ENCODE measurements at regions of chr7 and their contacts with region 1.

Region 1: DNA sequence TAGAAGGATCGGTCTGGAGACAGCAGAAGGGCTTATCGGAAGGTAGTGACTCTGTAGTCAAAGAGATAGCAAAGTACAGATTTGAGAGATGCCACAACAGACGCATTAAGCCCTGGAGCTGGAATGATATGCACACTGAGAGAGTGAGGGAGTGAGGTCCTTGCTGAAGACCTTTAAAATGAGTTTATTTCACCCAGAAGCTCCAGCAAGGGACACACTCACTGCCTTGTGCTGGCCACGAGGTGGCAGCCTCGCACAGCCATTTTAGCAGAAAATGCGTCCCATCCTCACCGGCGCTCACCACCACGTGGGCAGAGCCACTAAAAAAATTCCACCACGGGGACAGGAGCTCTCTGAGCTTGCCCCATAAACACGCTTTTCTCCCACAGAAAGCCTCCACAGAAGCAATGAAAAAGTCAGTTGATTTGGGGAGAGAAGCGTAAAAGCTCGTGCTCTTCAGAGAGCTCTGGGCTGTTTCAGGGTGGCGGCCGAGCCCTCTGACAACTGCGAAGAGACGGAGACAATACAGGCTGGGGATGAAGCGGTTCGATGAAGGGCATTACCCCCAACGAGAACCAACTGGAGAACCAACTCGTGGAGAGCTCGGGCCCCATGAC is 163.0 kb upstream of the KLF14 start:
- DNase-seq: peak; percentile 67 to 91
- ATAC-seq: peak; percentile 26 to 57
- H3K4me3 ChIP-seq: no peak overlapping the region
- H3K27ac ChIP-seq: peak overlapping the region; percentile 92 to 93
- H3K4me1 ChIP-seq: peaks cover 97% of the 10 kb centered on the region
- CTCF ChIP-seq: peak; percentile 85
- EP300 ChIP-seq: no peak
- POLR2A ChIP-seq: no peak
- RAD21 ChIP-seq: peak; percentile 90

Region 2: DNA sequence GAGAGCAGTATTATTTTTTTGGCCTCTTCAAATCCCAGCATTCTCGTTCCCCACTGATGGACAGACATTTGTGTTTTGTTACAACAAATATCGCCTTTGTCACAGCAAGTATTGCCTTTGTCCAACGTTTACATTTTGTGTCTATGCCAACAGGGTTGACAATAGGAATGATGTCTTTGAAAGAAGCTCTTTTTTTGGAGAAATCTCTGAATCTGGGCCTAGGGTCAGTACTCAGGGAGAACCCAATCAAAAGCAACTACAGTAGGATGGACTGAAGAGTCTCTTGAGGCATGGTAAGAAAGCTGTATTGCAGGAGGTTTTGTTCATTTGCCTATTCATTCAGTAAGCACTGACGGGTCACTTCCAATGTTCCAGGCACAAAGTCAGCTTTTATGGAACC is 105.3 kb before region 1 on chr7:
- CTCF ChIA-PET with region 1: no interaction called
- POLR2A ChIA-PET with region 1: no interaction called
- DNase-seq: no peak
- ATAC-seq: no peak
- H3K4me3 ChIP-seq: no peak overlapping the region
- H3K27ac ChIP-seq: no peak overlapping the region
- H3K4me1 ChIP-seq: no peaks in the 10 kb centered on the region
- CTCF ChIP-seq: no peak
- EP300 ChIP-seq: no peak
- POLR2A ChIP-seq: no peak
- RAD21 ChIP-seq: no peak

Region 3: GRCh38 chr7:130850956-130851355 is 46.0 kb before region 1 on chr7:
- CTCF ChIA-PET with region 1: interaction called, 17 read pairs
- POLR2A ChIA-PET with region 1: interaction called, 3 read pairs
- DNase-seq: no peak
- ATAC-seq: no peak
- H3K4me3 ChIP-seq: no peak overlapping the region
- H3K27ac ChIP-seq: peak overlapping the region; percentile 5; a peak in 1 of 6 replicates
- H3K4me1 ChIP-seq: peaks cover 48% of the 10 kb centered on the region
- CTCF ChIP-seq: no peak
- EP300 ChIP-seq: no peak
- POLR2A ChIP-seq: no peak
- RAD21 ChIP-seq: no peak

Region 4: DNA sequence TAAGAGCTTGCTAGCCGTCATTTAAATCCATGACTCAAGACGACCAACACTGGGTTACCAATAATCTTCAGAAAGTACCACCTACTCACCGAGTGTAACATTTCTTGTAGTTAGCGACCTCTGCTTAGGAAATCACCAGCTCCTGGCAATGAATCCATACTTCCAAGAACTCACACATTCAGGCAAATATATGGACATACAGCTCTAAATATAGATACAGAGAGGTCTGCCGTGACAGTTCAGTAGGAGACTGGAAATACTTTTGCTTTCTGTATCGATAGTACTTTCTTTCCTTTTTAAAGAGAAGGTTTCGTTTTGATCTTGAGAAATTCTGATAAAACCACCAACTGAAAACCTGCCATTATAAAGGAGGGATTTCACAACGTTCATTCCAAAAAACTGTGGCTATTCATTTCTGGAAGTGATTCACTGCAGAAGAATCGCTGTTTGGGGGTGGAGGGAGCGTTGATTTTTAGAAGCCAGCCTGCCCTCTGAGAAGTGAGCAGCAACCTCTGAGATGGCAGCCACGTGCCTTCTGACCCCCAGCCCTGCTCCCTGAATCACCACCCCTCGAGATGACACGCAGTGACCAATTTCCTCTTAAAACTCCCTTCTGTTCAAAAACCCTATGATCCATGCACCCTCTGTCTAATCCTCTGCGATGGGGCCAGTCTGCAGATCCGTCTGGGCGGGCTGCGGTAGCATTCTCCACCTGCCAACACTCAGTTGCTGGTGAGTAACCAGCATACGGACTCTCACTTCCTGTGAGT is 16.0 kb after region 1 on chr7:
- CTCF ChIA-PET with region 1: no interaction called
- POLR2A ChIA-PET with region 1: interaction called, 20 read pairs
- DNase-seq: peak in 1 of 2 experiments; percentile 91
- ATAC-seq: peak; percentile 75 to 78
- H3K4me3 ChIP-seq: peak overlapping the region; percentile 62
- H3K27ac ChIP-seq: peak overlapping the region; percentile 85 to 93
- H3K4me1 ChIP-seq: peaks cover 61% of the 10 kb centered on the region
- CTCF ChIP-seq: no peak
- EP300 ChIP-seq: peak; percentile 80 to 91; a peak in 4 of 5 replicates
- POLR2A ChIP-seq: peak; percentile 36; the same call in 1 of the 2 replicates
- RAD21 ChIP-seq: peak in 1 of 2 experiments; percentile 34; a peak in 2 of 5 replicates

Region 5: GRCh38 chr7:130941322-130942210 is 44.6 kb after region 1 on chr7:
- CTCF ChIA-PET with region 1: interaction called, 114 read pairs
- POLR2A ChIA-PET with region 1: interaction called, 4 read pairs
- DNase-seq: peak; percentile 49 to 80
- ATAC-seq: peak; percentile 75 to 78
- H3K4me3 ChIP-seq: peak overlapping the region; percentile 52
- H3K27ac ChIP-seq: peak overlapping the region; percentile 86 to 87
- H3K4me1 ChIP-seq: peaks cover 82% of the 10 kb centered on the region
- CTCF ChIP-seq: no peak
- EP300 ChIP-seq: no peak
- POLR2A ChIP-seq: no peak
- RAD21 ChIP-seq: 0 out of 5 replicates have a peak, but pooled peaks of 1 of the 2 experiments have one; percentile 19

Region 6: DNA sequence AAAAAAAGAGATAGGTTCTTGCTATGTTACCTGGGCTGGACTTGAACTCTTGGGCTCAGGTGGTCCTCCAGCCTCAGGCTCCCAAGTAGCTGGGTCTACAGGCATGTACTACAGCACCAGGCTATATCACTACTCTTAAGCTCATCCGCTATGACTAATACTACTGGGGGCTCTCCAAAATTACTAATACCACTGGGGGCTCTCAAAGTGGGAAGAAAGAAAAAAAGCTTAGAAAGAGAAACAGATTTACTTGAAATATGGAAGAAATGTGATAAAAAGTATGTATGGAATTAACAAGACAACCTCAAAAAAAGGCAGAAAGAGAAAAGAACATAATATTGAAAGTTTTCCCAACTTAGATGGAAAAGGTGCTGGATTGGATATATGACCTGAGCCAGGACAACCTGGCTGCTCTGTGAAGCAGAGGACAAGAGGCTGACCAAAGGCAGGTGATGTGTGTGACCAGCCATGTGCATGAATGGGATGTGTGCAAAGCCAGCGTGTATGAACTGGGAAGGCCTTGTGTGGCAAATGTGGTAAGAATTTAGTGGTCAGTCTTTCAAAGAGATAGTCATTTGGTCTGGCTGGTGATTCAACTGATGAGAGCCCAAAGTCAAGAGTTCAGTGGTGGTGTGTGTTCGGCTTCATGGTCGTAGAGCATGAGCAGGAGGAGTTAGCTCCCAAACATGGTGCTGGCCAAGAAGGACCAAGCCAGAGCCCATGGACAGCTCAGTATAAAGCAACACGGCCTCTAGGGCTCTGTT is 69.4 kb after region 1 on chr7:
- CTCF ChIA-PET with region 1: interaction called, 110 read pairs
- POLR2A ChIA-PET with region 1: no interaction called
- DNase-seq: no peak
- ATAC-seq: no peak
- H3K4me3 ChIP-seq: no peak overlapping the region
- H3K27ac ChIP-seq: peak overlapping the region in 1 of 2 experiments; percentile 42; a peak in 1 of 6 replicates
- H3K4me1 ChIP-seq: peaks cover 44% of the 10 kb centered on the region
- CTCF ChIP-seq: no peak
- EP300 ChIP-seq: no peak
- POLR2A ChIP-seq: no peak
- RAD21 ChIP-seq: no peak

Region 7: DNA sequence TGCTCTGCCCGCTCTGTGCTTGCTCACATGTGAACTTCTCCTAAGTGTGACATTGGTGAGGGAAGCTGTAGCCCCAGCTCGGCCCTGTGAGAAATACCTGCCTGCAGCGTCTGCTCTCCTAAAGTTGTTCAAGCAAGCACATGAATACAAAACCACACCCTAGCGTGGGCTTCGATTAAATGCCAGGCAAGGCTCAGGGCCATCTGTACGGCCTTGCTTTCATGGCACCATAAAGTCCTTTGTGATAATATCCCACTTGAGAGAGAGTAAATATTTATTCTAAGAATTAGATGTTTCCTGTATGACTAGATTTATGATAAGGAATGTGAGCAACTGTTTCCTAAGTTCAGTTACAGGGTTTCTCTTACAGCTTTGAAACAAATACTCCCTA is 99.8 kb after region 1 on chr7:
- CTCF ChIA-PET with region 1: interaction called, 14 read pairs
- POLR2A ChIA-PET with region 1: no interaction called
- DNase-seq: peak in 1 of 2 experiments; percentile 69
- ATAC-seq: peak; percentile 45 to 75; a peak in 5 of 6 replicates
- H3K4me3 ChIP-seq: no peak overlapping the region
- H3K27ac ChIP-seq: peak overlapping the region; percentile 69 to 81
- H3K4me1 ChIP-seq: peaks cover 60% of the 10 kb centered on the region
- CTCF ChIP-seq: no peak
- EP300 ChIP-seq: no peak
- POLR2A ChIP-seq: no peak
- RAD21 ChIP-seq: no peak

Region 8: DNA sequence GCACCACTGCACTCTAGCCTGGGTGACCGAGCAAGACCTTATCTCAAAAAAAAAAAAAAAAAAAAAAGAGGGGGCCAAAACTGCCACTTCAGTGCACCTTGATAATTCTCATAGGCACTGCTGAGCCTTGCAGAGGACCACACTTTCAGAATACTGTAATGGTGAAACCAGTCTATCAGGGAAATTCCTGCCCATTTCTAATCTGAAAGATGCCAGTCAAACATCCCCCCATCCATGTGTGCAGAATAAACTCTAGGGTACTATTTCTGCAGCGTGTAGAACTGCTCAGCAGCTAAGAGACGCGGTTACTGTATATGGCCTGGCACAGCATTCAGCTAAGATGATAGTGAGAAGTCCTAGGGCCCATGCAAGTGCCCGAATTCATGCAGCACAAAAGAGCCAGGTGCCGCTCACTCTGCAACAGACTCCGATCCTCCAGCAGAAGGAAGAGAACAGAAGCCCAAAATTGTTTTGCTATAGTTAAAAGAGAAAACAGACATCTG is 123.8 kb after region 1 on chr7:
- CTCF ChIA-PET with region 1: interaction called, 13 read pairs
- POLR2A ChIA-PET with region 1: no interaction called
- DNase-seq: no peak
- ATAC-seq: 0 out of 6 replicates have a peak, but pooled peaks of 1 of the 2 experiments have one; percentile 9
- H3K4me3 ChIP-seq: no peak overlapping the region
- H3K27ac ChIP-seq: no peak overlapping the region
- H3K4me1 ChIP-seq: peaks cover 24% of the 10 kb centered on the region
- CTCF ChIP-seq: no peak
- EP300 ChIP-seq: no peak
- POLR2A ChIP-seq: no peak
- RAD21 ChIP-seq: no peak

Measured in A549 (cell line).